Prostate gland (tissue), 2 donors: ENCODE measurements at regions of chr6 and their contacts with region 1.

Region 1: DNA sequence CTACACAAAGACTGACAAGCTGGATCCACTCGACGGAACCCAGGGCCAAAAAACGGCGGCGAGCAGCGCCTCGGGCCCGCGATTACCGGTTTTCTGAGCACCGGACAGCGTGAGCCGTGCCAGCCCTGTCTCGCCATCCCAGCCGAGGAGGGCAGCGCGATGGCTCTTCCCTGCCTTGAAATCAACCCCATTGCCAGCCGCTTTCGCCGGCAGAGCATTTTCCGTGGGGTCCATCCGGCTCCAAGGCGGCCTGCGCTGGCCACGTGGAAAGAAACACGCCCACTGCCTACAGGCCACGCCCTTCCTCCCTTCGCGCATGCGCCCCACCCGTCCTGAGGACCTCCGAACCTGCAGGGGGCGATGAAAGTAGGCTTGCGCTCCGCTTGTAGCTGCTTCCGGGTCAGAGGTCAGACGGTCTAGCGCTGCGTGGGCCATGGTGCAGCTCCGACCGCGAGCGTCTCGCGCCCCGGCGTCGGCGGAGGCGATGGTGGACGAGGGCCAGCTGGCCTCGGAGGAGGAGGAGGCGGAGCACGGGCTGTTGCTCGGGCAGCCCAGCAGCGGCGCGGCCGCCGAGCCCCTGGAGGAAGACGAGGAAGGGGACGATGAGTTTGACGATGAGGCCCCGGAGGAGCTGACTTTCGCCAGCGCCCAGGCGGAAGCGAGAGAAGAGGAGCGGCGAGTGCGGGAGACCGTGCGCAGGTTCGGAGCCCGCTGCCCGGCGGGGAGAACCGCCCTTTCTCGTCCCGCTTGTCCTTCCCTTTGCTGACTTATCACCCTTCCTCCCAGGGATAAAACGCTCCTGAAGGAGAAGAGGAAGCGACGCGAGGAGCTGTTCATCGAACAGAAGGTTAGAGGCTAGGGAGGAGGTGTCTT is at the start of gene NOL7:
- DNase-seq: peak; percentile 94
- H3K4me3 ChIP-seq: peak within 1 kb of the TSS; percentile 71
- H3K27ac ChIP-seq: peak within 1 kb of the TSS; percentile 81 to 84
- H3K4me1 ChIP-seq: peaks cover 2% of the 10 kb centered on the region
- H3K27me3 ChIP-seq: no peaks in the 10 kb centered on the region
- CTCF ChIP-seq: peak; percentile 81 to 99 (median 96)
- POLR2A ChIP-seq: peak; percentile 69
- total RNA-seq, gene NOL7: 68.3 to 108 TPM

Region 2: DNA sequence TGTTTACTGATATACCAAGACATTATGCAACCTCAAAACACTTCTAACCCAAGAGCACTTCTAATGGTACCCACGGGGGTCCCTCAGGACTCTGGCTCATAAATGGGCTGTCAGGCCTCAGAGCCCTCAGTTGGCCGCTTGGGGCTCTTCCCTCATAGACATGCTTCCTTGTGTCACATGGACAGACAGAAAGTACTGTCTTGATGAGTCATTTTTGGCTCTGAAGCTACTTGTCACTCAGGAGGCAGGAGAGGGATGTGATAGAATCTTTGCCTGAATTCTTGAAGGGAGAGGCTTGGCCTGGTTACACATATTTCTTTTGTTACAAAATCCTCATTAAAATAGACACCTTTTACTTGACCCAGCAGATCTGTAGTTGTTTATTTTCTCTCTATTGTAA is 1340.1 kb before region 1 on chr6:
- intact Hi-C with region 1: no loop called
- DNase-seq: no peak
- H3K4me3 ChIP-seq: no peak overlapping the region
- H3K27ac ChIP-seq: no peak overlapping the region
- H3K4me1 ChIP-seq: no peaks in the 10 kb centered on the region
- H3K27me3 ChIP-seq: no peaks in the 10 kb centered on the region
- CTCF ChIP-seq: no peak
- POLR2A ChIP-seq: no peak

Region 3: DNA sequence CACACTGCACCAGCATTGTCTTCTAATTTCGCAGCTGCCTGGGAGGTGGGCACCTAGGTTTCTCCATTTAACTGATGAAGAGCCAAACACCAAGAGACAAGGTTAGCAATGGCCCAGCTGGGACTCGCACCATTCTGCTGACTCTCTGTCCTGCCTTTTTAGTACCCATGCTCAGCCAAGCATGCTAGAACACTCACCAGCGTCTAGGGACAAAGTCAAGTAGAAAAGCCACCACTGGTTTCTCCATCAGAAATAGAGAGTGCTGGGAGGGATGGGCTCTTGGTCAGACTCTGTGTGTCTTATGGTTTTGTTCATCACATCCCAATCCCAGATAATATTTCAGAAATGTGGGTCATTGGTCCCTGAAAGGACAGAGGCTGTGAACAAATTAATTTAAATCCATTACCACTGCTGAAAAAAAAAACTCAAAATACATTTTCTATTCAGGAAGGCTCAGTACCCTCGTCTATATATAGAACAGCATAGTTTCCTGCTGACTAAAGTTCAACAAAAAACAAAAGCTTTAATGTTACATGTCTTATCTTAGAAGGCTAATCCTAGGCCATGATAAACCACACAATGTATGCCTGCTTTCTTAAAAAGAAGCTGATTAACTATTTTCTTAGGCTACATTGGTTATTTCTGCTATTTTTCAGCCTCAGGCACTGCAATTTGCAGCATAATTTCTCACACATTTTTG is 397.8 kb before region 1 on chr6:
- intact Hi-C with region 1: no loop called
- DNase-seq: no peak
- H3K4me3 ChIP-seq: no peak overlapping the region
- H3K27ac ChIP-seq: no peak overlapping the region
- H3K4me1 ChIP-seq: no peaks in the 10 kb centered on the region
- H3K27me3 ChIP-seq: no peaks in the 10 kb centered on the region
- CTCF ChIP-seq: no peak
- POLR2A ChIP-seq: no peak

Region 4: DNA sequence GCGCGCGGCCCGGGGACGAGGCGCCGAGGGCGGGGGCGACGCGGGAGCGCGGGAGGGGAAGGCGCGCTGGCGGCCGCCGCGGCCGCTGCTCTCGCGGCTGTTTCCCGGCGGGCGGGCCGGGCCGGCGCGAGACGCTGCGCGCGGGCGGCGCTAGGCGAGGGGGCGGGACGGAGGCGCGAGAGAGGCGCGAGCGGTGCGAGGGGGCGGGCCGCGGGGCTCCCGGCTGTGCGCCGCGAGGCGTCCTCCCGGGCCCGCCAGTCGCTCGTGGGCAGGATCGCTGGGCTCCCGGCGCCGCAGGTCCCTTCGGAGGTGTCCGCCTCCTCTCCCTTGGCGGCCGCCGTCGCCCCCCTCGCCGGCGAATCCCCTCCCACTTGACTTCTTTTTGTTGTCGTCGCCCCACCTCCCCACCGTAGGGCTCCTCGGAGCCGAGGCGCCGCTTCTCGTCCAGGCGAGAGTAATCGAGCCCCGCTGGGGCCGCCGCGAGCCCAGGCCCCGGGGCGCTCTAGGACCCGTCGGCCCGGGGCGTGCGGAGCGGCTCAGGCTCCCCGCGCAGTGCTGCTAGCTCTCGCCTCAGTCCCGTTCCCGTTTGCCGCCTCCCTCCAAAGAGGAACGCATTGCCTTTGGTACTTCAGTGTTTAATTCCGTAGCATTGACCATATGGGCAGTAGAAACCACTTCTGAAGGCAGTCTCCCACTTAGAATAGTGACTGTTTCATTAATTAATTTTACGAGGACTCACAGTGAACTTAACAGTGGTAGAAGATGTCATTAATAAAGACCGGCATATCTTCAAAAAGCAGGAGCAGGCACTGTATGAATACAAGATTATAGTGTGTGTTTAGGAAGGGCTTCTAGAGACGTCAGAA is 96.8 kb after region 1 on chr6 and contains the start of gene RANBP9:
- intact Hi-C with region 1: loop called (anchors 2 kb)
- DNase-seq: peak; percentile 82
- H3K4me3 ChIP-seq: peak within 1 kb of the TSS; percentile 78 to 81
- H3K27ac ChIP-seq: peak within 1 kb of the TSS; percentile 95 to 98
- H3K4me1 ChIP-seq: peaks cover 4% of the 10 kb centered on the region
- H3K27me3 ChIP-seq: no peaks in the 10 kb centered on the region
- CTCF ChIP-seq: no peak
- POLR2A ChIP-seq: peak; percentile 72
- total RNA-seq, gene RANBP9: 37.8 to 59.0 TPM